ENCODE measurements at regions of chr1 and their contacts with region 1.

Region 1: GRCh38 chr1:8702850-8703810 is 114.3 kb downstream of the RERE start:
- DNase-seq: peak; percentile 73
- H3K4me3 Mint-ChIP-seq: peak overlapping the region; percentile 88
- H3K27ac Mint-ChIP-seq: peak overlapping the region; percentile 87
- H3K4me1 Mint-ChIP-seq: peaks cover 46% of the 10 kb centered on the region
- H3K27me3 Mint-ChIP-seq: no peaks in the 10 kb centered on the region

Region 2: GRCh38 chr1:8604041-8604945 is 98.8 kb before region 1 on chr1:
- intact Hi-C with region 1: loop called (anchors 1 kb)
- DNase-seq: peak; percentile 46
- H3K4me3 Mint-ChIP-seq: peak overlapping the region; percentile 72
- H3K27ac Mint-ChIP-seq: peak overlapping the region; percentile 93
- H3K4me1 Mint-ChIP-seq: peaks cover 52% of the 10 kb centered on the region
- H3K27me3 Mint-ChIP-seq: no peaks in the 10 kb centered on the region

Region 3: DNA sequence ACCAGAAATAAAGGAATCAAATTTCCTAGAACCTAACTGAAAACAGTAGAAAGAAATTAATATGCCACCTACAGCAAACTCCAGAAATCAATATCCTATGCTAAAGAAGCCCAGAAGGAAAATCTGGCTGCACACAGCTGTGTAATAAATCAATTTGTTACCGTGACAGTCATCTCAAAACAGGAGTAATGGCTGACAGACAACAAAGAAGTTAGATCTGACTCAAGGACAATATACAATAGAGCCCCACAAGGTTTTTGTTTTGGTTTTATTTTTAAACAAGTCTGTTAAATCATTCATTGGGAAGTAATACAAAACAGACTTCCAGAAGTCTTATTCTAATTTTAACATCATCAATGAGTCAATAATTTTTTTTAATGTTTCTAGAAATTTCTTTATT is 54.1 kb before region 1 on chr1:
- intact Hi-C with region 1: loop called (anchors 1 kb)
- DNase-seq: no peak
- H3K4me3 Mint-ChIP-seq: no peak overlapping the region
- H3K27ac Mint-ChIP-seq: peak overlapping the region; percentile 46
- H3K4me1 Mint-ChIP-seq: peaks cover 61% of the 10 kb centered on the region
- H3K27me3 Mint-ChIP-seq: no peaks in the 10 kb centered on the region

Region 4: GRCh38 chr1:8663915-8664329 is 39.2 kb before region 1 on chr1:
- intact Hi-C with region 1: loop called (anchors 5 kb)
- DNase-seq: no peak
- H3K4me3 Mint-ChIP-seq: no peak overlapping the region
- H3K27ac Mint-ChIP-seq: no peak overlapping the region
- H3K4me1 Mint-ChIP-seq: peaks cover 21% of the 10 kb centered on the region
- H3K27me3 Mint-ChIP-seq: no peaks in the 10 kb centered on the region

Region 5: DNA sequence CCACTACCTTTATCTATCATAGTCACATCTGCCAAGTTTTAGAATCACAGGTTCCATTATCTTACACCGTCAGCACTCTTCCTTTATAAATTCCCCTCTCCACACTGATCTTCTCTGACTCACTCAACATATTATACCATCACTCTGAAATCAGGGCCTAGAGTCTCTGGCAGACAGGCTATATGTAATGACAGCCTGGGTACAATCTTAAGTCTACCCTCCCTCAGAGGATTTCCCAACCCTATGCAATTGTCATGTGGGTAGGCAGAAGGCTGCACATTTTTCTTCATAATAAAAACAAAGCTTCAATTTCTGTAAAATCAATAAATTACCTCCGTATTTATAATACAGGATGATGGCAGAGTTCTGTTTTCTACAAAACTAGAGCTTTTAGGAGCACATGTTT is 23.7 kb before region 1 on chr1:
- intact Hi-C with region 1: loop called (anchors 1 kb)
- DNase-seq: no peak
- H3K4me3 Mint-ChIP-seq: no peak overlapping the region
- H3K27ac Mint-ChIP-seq: no peak overlapping the region
- H3K4me1 Mint-ChIP-seq: peaks cover 52% of the 10 kb centered on the region
- H3K27me3 Mint-ChIP-seq: no peaks in the 10 kb centered on the region

Region 6: DNA sequence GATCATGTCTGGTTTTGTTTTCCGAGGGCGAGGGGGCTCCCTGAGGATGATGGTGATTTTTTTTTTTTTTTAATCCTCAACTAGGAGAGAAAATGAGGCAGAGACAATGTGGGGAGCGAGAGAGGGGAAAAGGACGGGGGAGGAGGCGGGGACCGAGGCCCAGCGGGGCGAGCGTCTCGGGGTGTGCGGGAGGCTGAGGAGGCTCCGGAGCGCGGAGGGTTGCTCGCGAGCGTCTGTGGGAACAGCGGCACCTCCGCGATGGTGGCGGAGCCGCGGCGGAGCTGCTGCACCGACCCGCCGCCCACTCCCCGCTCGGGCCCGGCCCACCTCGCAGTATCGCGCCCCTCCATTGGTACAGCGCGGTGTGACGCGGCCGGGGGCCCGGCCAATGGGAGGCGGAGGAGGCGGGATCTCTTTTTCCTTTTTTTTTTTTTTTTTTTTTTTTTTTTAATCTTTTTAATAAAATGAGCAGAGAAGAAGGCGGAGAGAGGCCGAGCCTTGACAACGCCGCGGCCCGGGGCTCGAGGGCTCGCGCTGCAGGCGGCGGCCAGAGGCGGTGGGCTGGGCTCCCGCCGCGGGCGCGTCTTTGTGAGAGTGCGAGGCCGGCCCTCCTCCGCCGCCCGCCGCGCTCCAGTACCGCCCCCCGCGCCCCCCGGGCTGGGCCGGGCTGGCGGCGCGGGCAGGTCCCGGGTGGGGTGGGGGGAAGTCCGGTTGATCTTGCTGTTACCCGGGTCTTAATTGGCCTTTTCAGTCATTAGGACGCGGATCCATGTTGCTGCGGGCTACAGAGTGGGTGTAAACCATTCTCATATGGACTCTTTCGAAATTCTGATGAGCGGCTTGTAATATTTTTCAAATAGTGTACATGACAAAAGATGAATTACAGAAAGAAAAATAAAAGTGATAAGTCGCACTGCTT is 114.5 kb after region 1 on chr1 and contains the start of gene RERE:
- intact Hi-C with region 1: loop called (anchors 2 kb)
- DNase-seq: peak; percentile 96
- H3K4me3 Mint-ChIP-seq: peak within 1 kb of the TSS; percentile 86
- H3K27ac Mint-ChIP-seq: peak within 1 kb of the TSS; percentile 84
- H3K4me1 Mint-ChIP-seq: peaks cover 41% of the 10 kb centered on the region
- H3K27me3 Mint-ChIP-seq: peaks cover 11% of the 10 kb centered on the region
- total RNA-seq, gene RERE: 139 and 154 TPM in 2 replicates

Region 7: DNA sequence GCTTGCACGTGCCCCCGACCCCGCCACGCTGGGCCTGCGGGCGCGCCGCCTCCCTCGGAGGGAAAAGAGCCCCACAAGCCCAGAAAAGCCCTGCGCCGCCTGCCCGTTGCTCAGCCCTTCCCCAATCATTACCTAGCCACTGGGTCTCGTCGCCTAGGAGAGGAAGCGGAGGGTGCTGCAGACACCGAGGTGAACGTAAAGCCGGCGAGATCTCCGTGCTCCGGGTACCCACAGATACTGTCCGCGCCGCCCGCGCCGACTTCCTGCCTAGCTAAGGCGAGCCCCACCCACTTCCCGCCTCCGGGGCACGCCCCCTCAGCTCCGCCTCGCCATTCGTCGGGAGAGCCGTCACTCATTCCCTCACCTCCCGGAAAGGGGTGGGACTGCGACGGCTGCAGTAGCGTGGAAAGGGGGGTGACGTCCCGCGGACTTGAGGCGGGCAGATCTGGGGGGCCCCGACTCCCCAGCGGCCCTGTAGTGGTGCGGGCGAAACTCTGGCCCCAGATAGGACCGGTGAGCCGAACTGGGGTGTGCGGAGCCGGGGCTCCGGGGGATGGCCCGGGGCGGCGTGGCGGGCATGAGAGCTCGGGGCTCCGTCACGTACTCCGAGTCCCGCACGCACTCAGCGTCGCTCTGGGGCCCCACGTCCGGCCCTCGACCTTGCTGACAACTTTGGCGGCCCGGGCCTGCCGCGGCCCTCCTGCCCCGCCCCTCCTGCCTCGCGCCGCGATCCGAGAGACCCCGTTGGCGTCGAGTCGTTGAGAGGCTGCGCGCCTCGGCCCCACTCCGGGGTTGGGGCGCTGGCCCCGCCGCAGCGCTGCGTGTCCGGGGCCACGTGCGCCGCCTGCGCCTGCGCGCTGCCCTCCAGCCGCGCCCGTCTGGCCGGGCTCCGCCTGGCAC is 175.6 kb after region 1 on chr1 and contains the start of gene ENO1:
- intact Hi-C with region 1: loop called (anchors 5 kb)
- DNase-seq: peak; percentile 100
- H3K4me3 Mint-ChIP-seq: peak within 1 kb of the TSS; percentile 98
- H3K27ac Mint-ChIP-seq: peak within 1 kb of the TSS; percentile 100
- H3K4me1 Mint-ChIP-seq: peaks cover 29% of the 10 kb centered on the region
- H3K27me3 Mint-ChIP-seq: no peaks in the 10 kb centered on the region
- total RNA-seq, gene ENO1: 3,630 and 3,637 TPM in 2 replicates